ENCODE measurements at regions of chr1 and their contacts with region 1.

Region 1: GRCh38 chr1:240946926-240947325 is 335.0 kb upstream of the GREM2 start:
- DNase-seq: no peak
- ATAC-seq: no peak
- H3K4me3 ChIP-seq: no peak overlapping the region
- H3K27ac ChIP-seq: no peak overlapping the region
- H3K4me1 ChIP-seq: no peaks in the 10 kb centered on the region
- H3K27me3 ChIP-seq: no peaks in the 10 kb centered on the region
- CTCF ChIP-seq: no peak

Region 2: GRCh38 chr1:240663160-240663879 is 283.6 kb before region 1 on chr1:
- intact Hi-C with region 1: no loop called
- DNase-seq: no peak
- ATAC-seq: no peak
- H3K4me3 ChIP-seq: no peak overlapping the region
- H3K27ac ChIP-seq: no peak overlapping the region
- H3K4me1 ChIP-seq: no peaks in the 10 kb centered on the region
- H3K27me3 ChIP-seq: no peaks in the 10 kb centered on the region
- CTCF ChIP-seq: no peak

Region 3: GRCh38 chr1:240732390-240732789 is 214.5 kb before region 1 on chr1:
- intact Hi-C with region 1: loop called in 1 of 2 experiments (anchors 5 kb)
- DNase-seq: no peak
- ATAC-seq: no peak
- H3K4me3 ChIP-seq: no peak overlapping the region
- H3K27ac ChIP-seq: no peak overlapping the region
- H3K4me1 ChIP-seq: no peaks in the 10 kb centered on the region
- H3K27me3 ChIP-seq: no peaks in the 10 kb centered on the region
- CTCF ChIP-seq: peak; percentile 29